ENCODE measurements at regions of chr11 and their contacts with region 1.

Region 1: GRCh38 chr11:62413060-62413696 is 5.7 kb upstream of the SCGB1A1 start:
- DNase-seq: no peak
- H3K4me3 ChIP-seq: no peak overlapping the region
- H3K4me3 Mint-ChIP-seq: no peak overlapping the region
- H3K27ac ChIP-seq: no peak overlapping the region
- H3K27ac Mint-ChIP-seq: peak overlapping the region in 1 of 8 donors; percentile 95
- H3K4me1 ChIP-seq: no peaks in the 10 kb centered on the region
- H3K4me1 Mint-ChIP-seq: no peaks in the 10 kb centered on the region
- H3K27me3 ChIP-seq: no peaks in the 10 kb centered on the region
- H3K27me3 Mint-ChIP-seq: no peaks in the 10 kb centered on the region

Region 2: GRCh38 chr11:62383822-62384221 is 29.4 kb before region 1 on chr11:
- CTCF ChIA-PET with region 1: no interaction called
- POLR2A ChIA-PET with region 1: no interaction called
- DNase-seq: no peak
- H3K4me3 ChIP-seq: no peak overlapping the region
- H3K4me3 Mint-ChIP-seq: no peak overlapping the region
- H3K27ac ChIP-seq: no peak overlapping the region
- H3K27ac Mint-ChIP-seq: no peak overlapping the region
- H3K4me1 ChIP-seq: peaks cover 10% of the 10 kb centered on the region
- H3K4me1 Mint-ChIP-seq: peaks cover 12 to 31% (median 24%) of the 10 kb centered on the region in 3 donors
- H3K27me3 ChIP-seq: no peaks in the 10 kb centered on the region
- H3K27me3 Mint-ChIP-seq: no peaks in the 10 kb centered on the region

Region 3: DNA sequence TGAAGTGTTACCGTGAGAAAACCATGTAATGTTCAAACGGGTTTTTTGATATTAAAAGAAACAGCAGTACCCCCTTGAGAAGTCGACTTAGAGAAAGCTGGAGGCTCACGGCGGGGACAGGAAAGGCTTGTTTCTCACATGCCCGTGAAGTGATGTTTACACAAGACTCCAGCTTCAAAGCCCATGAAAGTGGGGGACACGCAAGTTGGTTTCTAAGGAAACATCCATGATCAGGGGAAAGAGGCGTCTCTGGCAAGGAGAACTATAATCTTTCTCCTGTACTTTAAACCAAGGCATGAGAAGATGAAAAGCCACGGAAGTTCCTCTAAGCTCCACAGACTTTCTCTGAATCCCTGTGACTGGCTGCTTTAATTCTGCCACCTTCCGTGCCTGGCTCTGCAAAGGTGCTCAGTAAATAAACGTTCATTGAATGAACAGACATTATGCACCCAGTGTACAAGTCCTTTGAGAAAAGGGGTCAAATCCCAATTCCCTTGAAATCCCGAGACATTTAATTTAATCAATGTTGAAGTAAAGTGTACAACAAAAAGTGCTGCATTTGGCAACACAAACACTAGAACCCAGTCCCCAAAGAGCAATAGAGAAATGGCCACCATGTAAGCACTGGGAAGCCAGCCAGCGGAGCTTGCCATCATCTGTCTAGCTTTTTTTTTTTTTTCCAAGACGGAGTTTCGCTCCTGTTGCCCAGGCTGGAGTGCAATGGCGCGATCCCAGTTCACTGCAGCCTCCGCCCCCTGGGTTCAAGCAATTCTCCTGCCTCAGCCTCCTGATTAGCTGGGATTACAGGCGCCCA is 74.8 kb after region 1 on chr11:
- CTCF ChIA-PET with region 1: no interaction called
- POLR2A ChIA-PET with region 1: no interaction called
- DNase-seq: no peak
- H3K4me3 ChIP-seq: no peak overlapping the region
- H3K4me3 Mint-ChIP-seq: no peak overlapping the region
- H3K27ac ChIP-seq: no peak overlapping the region
- H3K27ac Mint-ChIP-seq: peak overlapping the region in 1 of 8 donors; percentile 70
- H3K4me1 ChIP-seq: no peaks in the 10 kb centered on the region
- H3K4me1 Mint-ChIP-seq: peaks cover 0 to 7% (median 3%) of the 10 kb centered on the region in 3 donors
- H3K27me3 ChIP-seq: no peaks in the 10 kb centered on the region
- H3K27me3 Mint-ChIP-seq: peaks cover 0 to 4% of the 10 kb centered on the region in 2 donors

Region 4: DNA sequence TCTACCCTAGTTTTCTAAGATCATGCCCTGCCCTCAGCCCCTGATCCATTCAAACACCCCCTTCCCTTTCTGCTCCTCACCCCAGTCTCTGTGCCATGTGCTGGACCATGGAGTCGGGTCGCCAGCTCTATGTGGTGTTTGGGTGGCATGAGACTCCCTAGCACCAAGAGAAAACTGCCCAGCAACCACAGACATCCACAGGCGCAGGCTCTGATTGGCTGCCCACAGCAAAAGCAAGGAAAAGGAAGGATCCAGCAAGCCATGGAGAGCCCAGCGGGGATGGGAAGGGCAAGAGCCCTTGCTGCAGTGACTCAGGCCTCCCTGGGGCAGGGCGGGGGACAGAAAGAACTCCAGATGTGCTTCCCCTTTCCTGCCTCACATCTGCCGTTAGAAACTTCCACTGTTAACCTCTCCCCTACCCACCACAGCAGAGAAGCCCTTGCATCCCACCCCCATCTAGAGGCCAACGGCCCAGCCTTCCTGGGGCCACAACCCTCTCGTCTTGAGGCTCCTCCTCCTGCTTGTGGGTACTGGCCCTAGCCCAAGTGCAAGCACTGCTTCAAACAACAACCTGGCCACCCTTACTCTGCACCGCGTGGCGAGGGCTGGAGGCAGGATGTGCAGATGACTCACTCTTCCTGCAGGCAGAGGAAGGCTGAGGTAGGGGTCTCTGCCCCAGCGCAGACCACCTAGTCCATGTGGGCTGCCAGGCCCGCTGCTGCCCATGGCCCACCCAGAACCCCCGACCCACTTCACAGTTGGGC is 143.1 kb after region 1 on chr11:
- CTCF ChIA-PET with region 1: interaction called, 10 read pairs
- POLR2A ChIA-PET with region 1: no interaction called
- DNase-seq: peak; percentile 74 to 95 (median 83)
- H3K4me3 ChIP-seq: peak overlapping the region; percentile 70
- H3K4me3 Mint-ChIP-seq: peak overlapping the region; percentile 80 to 95 (median 85)
- H3K27ac ChIP-seq: peak overlapping the region; percentile 95
- H3K27ac Mint-ChIP-seq: peak overlapping the region; percentile 97 to 100 (median 99)
- H3K4me1 ChIP-seq: peaks cover 96% of the 10 kb centered on the region
- H3K4me1 Mint-ChIP-seq: peaks cover 91 to 97% (median 96%) of the 10 kb centered on the region in 3 donors
- H3K27me3 ChIP-seq: no peaks in the 10 kb centered on the region
- H3K27me3 Mint-ChIP-seq: peaks cover 0 to 5% of the 10 kb centered on the region in 2 donors